ENCODE measurements at regions of chr20 and their contacts with region 1.

Region 1: DNA sequence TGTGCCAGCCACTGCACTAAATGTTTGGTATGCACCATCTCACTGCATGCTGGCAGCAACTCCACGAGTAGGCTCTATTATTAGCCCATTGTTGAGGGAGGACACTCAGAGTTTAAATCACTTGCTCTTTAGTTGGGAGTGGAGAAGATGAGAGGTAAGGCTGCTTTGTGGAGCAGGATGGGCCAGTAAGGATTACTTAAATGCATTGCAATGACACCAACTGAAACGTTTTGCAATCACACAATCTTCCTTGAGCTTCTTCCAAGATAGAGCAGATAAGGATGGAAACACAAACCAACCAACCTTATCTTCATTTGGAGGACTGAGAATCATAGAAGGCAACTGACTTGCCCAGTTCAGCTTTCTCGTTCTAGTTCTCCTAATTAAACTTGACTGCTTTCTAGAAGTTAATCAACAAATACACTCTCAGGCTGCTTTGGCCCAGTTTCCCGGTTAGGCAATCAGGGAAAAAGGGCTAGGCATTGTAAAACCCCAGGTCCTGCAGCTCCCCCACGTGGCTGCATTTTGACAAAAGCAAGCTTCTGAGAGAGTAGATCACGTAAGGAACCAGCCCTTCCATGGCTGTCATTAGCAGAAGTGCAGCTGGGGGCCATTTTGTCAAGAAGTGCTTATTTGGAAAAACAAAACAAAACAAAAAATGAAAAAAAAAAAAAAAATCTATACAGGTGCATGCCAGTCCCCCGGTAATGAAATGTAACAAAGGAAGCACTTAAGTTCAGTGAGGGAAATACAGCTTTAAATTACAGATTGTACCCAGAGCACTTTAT is 130.6 kb downstream of the BCAS1 start:
- DNase-seq: peak; percentile 69 to 95 (median 90)

Region 2: DNA sequence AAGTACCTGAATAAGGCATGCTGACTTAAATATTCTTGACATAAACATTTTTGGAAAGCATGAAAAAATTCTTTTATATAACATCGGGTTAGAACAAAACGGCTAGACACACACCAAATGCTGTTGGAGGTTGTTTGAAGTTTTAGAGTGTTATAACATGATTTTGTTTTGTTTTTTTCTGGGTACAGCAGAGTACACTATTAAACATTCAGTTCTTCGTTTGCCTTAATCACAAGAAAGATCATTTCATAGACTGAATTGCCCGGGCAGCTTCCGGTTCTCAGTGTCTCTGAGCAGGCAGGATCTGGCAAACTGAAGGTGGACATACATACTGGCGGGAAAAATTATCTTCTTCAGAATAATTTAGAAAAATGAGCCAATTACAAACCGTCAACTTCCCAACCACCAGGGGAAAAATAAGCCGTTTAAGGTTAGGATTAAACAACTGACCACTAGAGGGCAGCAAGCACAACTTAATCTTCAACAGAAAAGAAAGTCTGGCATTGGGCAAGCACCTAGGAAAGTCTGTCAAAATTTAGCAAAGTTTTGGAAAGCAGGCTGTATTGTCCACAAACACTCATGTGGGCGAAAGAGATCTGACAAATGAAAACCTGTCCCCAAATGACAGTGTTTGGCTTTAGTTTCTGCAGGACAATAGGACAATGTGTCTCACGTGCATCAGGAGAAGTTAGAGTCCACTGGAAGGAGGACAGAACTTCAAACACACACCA is 361.1 kb before region 1 on chr20:
- intact Hi-C with region 1: loop called (anchors 5 kb)
- DNase-seq: peak in 28 of 42 donors; percentile 17 to 90 (median 64)

Region 3: GRCh38 chr20:53708129-53708968 is 231.4 kb before region 1 on chr20:
- intact Hi-C with region 1: no loop called
- DNase-seq: no peak

Region 4: DNA sequence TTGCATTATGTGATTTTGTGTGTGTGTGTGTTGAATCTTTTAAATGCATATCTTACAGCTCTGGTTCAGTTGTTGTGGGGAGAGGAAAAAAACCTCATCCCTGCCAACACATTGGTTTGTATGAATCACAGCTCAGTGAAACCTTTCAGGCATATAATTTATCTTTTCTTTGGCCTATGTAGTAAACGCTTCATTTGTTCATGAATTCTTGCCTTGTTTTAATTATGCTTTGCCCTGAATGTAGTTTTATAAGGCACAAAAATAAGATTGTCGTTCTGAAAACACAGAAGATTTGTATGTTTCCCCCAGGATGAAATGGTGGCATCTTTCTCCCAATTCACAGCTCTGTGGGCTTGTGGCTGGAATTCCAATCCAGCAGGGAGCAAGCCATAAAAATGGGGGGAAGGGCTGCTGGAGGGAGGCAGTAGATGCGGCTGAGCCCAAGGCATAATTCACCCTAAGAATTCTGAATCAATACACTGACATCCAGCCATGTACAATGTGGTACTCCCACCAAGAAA is 85.5 kb after region 1 on chr20:
- intact Hi-C with region 1: loop called (anchors 5 kb)
- DNase-seq: peak in 8 of 42 donors; percentile 19 to 61 (median 28)

Region 5: GRCh38 chr20:54062812-54063280 is 123.1 kb after region 1 on chr20:
- intact Hi-C with region 1: loop called (anchors 5 kb)
- DNase-seq: peak in 14 of 42 donors; percentile 7 to 68 (median 26)

Region 6: DNA sequence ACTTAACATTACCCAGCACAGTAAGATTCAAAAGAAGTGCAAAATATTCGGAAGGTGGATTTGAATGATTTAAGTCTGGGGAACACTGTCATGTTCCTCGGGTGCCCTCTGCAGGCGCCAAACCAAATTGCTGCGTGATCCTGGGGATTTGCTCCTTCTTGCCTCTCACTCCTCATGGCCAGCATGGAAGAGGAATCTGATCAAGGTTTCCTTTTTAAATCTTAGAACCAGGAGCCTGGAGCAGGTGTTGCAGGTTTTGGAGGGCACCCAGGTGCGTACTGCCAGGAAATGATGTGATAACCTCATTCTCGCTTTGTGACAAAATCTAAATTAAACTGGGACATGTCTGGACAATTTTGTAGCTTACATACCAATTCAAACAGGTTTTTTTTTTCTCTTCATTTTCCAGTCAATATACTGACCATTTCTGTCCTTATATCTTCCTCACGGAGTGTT is 260.0 kb after region 1 on chr20:
- intact Hi-C with region 1: loop called (anchors 10 kb)
- DNase-seq: peak; percentile 54 to 93 (median 84)

Region 7: DNA sequence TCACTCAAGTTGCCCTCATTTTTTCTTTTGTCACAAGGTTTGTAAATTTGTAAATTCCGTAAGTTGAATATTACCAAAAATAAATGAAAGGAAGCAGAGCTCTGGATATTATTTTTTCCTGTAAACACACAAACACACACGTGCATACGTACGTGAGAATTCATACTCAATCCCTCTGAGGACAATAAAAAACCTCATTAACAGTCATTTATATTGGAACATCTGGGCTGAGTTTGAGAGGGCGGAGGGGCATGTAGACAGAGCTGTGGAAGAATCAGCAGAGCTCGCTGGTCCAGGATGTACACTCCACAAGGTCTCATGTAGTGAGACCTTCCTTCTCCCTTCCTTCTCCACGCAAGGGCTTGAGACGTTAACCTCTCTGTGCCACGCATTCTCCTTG is 511.4 kb after region 1 on chr20:
- intact Hi-C with region 1: no loop called
- DNase-seq: no peak

Measured in head of caudate nucleus (tissue), 42 donors.